Ascending aorta (tissue), 2 donors: ENCODE measurements at regions of chr3 and their contacts with region 1.

Region 1: GRCh38 chr3:192831111-192831644 is 86.5 kb downstream of the MB21D2 start:
- DNase-seq: no peak
- H3K4me3 ChIP-seq: no peak overlapping the region
- H3K27ac ChIP-seq: peak overlapping the region; percentile 43 to 61
- H3K4me1 ChIP-seq: peaks cover 12 to 18% of the 10 kb centered on the region in 2 donors
- H3K27me3 ChIP-seq: no peaks in the 10 kb centered on the region
- CTCF ChIP-seq: no peak

Region 2: DNA sequence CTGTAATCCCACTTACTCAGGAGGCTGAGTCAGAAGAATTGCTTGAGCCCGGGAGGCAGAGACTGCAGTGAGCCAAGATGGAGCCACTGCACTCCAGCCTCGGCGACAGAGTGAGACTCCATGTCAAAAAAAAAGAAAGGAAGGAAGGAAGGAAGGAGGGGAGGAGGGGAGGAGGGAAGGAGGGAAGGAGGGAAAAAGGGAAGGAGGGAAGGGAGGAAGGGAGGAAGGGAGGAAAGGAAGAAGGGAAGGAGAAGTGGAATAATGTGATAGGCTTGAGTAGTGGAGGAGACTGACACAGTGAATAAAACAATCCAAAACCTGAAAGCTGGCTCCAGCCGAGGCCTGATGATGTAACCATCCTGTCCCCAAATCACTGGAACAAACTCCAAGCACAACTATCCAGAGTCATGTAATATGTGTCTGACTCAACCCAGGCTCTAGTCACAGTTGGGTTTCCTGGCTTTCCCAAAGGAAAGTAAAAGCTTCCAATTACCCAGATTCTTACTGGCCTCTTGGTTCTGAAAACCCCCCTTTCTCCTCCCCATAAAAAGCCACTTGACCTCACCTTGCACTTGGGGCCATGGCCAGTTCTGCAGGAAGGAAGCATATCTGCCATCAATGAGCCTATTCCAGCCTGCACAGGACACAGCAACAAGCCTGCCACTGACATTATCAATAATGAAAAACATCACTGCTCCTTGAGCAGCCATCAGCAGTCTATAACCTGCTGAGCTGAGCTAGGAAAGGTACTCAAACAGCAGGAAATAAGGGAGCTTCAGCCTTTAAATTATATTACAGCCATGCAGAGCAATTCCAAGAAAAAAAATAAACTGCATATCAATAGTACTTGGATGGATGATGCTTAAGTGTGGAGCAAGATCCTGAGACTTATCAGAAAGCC is 38.2 kb after region 1 on chr3:
- intact Hi-C with region 1: loop called (anchors 2 kb)
- DNase-seq: peak in 1 of 2 donors; percentile 79
- H3K4me3 ChIP-seq: peak overlapping the region in 1 of 2 donors; percentile 14
- H3K27ac ChIP-seq: peak overlapping the region; percentile 13 to 68
- H3K4me1 ChIP-seq: peaks cover 0 to 3% of the 10 kb centered on the region in 2 donors
- H3K27me3 ChIP-seq: no peaks in the 10 kb centered on the region
- CTCF ChIP-seq: no peak

Region 3: DNA sequence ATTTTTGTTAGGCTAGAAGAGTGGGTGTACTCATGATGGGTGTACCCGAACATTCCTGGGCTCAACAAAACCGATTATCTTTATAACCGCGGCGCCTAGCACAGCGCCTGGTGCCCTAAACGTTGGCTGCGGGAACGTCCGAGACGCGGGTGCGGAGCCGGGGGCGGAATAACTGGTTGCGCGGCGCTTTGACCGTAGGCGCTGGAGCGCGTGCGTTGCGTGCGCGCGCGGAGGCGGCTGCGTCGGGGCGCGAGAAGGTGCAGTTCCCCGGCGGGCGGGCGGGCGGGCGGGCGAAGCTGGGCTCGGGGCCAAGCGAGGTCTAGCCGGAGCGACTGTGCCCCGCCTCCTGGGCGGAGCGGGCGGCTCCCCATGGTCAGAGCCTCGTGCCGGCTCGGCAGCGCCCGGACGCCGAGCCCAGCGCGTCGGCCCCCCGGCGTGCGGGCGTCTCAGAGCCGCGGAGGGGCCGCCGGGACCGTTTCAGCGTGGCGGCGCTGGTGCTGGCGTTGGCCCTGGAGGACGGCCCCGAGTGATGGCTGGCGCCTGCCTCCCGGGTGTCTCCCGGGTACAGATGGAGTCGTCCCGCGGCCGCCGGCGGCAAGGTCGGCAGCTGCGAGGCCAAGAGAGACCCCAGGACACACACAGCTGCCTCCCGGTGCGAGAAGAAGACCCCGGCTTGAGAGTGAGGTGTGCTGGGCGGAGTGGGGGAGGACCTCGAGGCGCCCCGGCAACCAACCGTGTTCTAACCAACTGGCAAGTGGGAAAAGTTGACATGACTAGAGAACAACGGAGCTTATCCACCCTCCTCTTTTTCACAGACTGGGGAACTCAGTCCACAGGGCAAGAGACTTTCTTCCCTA is 409.9 kb after region 1 on chr3 and contains the start of gene PLAAT1:
- intact Hi-C with region 1: loop called (anchors 5 kb)
- DNase-seq: peak in 1 of 2 donors; percentile 66
- H3K4me3 ChIP-seq: peak within 1 kb of the TSS; percentile 62 to 64
- H3K27ac ChIP-seq: peak within 1 kb of the TSS; percentile 69 to 79
- H3K4me1 ChIP-seq: no peaks in the 10 kb centered on the region
- H3K27me3 ChIP-seq: no peaks in the 10 kb centered on the region
- CTCF ChIP-seq: no peak
- total RNA-seq, gene PLAAT1: not detected